PC-9 (cell line): ENCODE measurements at regions of chr6 and their contacts with region 1.

Region 1: GRCh38 chr6:108689247-108690161 is 128.8 kb downstream of the FOXO3 start:
- DNase-seq: peak; percentile 96 to 99
- H3K4me3 ChIP-seq: peak overlapping the region; percentile 7; the same call in 1 of the 2 replicates
- H3K27ac ChIP-seq: peak overlapping the region; percentile 83
- H3K4me1 ChIP-seq: peaks cover 66% of the 10 kb centered on the region
- H3K27me3 ChIP-seq: no peaks in the 10 kb centered on the region
- CTCF ChIP-seq: no peak

Region 2: DNA sequence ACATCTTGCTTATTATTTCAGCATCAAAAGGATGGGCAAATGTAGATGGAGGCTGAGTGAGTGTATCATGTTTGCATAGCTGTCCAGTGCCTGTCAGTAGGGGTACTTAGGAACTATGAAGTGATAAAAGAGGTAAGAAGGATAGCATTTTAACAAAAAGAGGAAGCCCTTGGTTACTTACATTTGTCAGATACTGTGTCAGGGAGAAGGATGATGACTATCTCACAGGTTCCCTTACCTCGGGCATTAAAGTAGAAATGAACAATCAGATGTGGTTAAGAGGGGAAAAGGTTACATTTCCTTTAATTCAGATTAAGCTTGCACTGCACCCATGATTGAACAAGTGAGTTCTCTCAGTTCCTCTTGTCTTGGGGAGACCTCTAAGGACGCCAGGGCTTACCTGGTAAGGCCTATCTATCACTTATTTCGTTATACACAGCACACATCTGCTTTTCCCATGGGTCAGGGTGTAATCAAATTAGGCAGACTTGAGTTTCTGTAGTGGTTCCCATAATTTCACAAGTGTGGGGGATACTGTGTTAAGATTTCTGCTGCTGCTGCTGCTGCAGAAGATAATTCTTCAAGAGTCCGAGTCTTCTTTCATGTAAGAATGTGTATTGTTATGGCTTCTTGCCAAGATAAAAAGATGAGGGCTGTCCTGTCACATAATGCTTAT is 124.3 kb before region 1 on chr6:
- CTCF ChIA-PET with region 1: no interaction called
- POLR2A ChIA-PET with region 1: interaction called, 9 read pairs
- intact Hi-C with region 1: loop called (anchors 1 kb)
- DNase-seq: peak in 1 of 2 experiments; percentile 67
- H3K4me3 ChIP-seq: peak overlapping the region; percentile 99
- H3K27ac ChIP-seq: peak overlapping the region; percentile 84
- H3K4me1 ChIP-seq: peaks cover 37% of the 10 kb centered on the region
- H3K27me3 ChIP-seq: no peaks in the 10 kb centered on the region
- CTCF ChIP-seq: no peak

Region 3: DNA sequence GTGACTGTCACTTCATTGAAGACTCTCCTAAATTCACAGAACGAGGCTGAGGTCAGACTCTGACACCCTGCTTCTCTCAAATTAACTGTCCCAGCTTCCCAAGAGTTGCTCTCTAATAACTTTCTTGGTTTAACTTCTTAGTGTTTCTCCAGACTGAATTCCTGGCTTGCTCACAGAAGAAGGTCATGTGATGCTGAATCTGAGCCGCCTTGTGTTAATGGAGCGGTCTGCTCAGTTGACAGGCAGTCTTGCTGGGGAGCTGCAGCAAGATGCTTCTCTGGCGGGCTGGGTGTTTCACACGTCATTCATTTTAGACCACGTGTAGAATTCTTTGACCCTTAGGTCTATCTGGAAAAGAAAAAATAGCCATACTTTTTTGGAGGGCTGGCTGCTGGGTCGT is 21.5 kb before region 1 on chr6:
- CTCF ChIA-PET with region 1: no interaction called
- POLR2A ChIA-PET with region 1: no interaction called
- intact Hi-C with region 1: no loop called
- DNase-seq: no peak
- H3K4me3 ChIP-seq: no peak overlapping the region
- H3K27ac ChIP-seq: no peak overlapping the region; the same call in 1 of the 2 replicates
- H3K4me1 ChIP-seq: peaks cover 38% of the 10 kb centered on the region
- H3K27me3 ChIP-seq: no peaks in the 10 kb centered on the region
- CTCF ChIP-seq: no peak

Region 4: DNA sequence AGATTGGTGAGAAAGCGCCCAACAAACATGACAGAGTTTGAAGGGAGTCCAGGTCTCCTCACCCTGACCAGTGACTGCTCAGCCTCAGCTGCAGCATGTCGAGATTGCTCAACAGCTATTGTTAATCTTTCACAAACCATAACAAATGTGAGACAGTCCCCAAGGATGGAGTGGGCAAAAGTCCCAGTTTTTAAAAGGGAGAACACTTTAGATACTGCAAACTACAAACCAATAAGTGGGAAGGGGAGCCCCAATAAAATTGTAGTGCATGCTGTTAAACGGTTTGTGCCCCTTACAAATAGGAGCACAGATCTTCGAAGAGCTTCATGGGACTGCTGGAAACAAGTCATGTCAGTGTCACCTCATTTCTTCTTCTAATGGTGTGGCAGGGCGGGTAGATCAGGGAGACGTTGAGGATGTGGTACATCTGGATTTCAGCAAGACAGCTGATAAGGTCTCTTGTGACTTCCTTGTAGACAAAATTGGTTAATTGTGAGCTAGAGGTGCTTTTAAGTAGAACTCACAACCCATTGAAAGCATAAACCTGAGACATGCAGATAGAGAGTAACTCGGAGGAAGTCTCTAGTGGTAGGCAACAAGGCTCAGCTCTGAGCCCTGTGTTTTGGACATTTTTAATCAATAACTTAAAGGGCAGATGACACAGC is 24.7 kb after region 1 on chr6:
- CTCF ChIA-PET with region 1: no interaction called
- POLR2A ChIA-PET with region 1: interaction called, 3 read pairs
- intact Hi-C with region 1: loop called (anchors 1 kb)
- DNase-seq: peak in 1 of 2 experiments; percentile 35
- H3K4me3 ChIP-seq: no peak overlapping the region
- H3K27ac ChIP-seq: no peak overlapping the region
- H3K4me1 ChIP-seq: peaks cover 35% of the 10 kb centered on the region
- H3K27me3 ChIP-seq: no peaks in the 10 kb centered on the region
- CTCF ChIP-seq: no peak

Region 5: DNA sequence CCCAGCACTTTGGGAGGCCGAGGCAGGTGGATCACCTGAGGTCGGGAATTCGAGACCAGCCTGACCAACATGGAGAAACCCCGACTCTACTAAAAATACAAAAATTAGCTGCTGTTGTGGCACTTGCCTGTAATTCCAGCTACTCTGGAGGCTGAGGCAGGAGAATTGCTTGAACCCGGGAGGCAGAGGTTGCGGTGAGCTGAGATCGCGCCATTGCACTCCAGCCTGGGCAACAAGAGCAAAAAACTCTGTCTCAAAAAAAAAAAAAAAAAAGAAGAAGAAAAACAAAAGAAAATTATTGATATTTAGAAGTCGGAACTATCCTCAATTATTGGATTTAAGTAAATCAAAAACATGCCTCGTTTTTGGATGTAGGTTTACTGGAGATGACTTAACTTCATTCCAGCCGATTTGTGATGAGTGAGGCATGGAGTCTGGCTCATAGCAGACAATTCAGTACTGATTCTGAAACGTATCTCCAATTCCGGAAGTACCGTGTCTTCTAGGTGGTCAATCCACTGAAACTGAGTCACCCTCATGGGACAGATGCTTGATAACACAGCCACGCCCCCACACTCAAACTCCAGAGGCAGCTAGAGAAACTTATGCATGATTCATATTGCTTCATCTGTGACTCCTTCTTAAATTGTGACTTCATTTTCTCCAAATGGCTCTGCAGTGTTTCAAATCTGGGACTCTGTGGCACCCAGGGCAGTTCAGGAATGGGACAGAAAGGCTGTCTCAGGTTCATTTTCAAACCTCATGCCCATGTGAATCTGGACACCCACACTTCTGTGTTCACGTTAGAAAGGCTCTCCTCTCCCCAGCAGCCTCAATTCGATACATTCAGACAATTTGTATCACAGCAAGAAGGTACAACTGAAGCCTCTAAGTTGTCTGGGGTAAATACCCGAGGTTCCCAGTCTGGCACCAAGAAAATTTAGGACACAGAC is 48.4 kb after region 1 on chr6:
- CTCF ChIA-PET with region 1: no interaction called
- POLR2A ChIA-PET with region 1: interaction called, 7 read pairs
- intact Hi-C with region 1: loop called (anchors 1 kb)
- DNase-seq: peak; percentile 84 to 99
- H3K4me3 ChIP-seq: peak overlapping the region; percentile 59
- H3K27ac ChIP-seq: peak overlapping the region; percentile 99
- H3K4me1 ChIP-seq: peaks cover 93% of the 10 kb centered on the region
- H3K27me3 ChIP-seq: no peaks in the 10 kb centered on the region
- CTCF ChIP-seq: no peak

Region 6: DNA sequence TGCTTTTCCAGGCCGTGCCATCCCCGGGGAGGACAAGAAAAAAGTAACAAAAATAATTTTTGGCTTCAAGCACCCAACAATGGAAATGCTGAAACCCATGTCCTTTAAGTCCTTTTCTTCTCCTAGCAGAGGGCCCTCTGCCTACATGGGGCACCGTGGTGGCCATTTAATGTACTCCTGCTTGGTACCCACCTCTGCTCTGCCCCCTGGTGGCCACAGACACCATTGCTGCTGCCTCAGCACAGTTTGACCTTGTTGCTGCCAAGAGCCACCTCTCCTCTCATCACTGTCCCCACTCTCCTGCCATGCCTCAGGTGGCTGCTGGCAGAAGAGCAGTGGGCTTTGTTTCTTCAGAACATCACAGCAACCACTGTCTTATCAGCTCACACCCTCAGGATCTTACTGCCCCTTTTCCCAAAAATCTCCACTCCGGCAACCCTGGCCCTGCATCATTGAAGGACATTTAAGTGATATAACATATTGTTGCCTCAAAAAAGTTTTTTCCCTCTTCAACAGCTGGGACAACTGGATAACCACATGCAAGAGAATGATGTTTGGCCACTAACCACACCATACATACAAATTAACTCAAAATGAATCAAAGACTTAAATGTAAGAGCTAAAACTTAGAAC is 145.8 kb after region 1 on chr6:
- CTCF ChIA-PET with region 1: no interaction called
- POLR2A ChIA-PET with region 1: no interaction called
- intact Hi-C with region 1: loop called (anchors 1 kb)
- DNase-seq: peak; percentile 61 to 78
- H3K4me3 ChIP-seq: no peak overlapping the region
- H3K27ac ChIP-seq: no peak overlapping the region
- H3K4me1 ChIP-seq: no peaks in the 10 kb centered on the region
- H3K27me3 ChIP-seq: no peaks in the 10 kb centered on the region
- CTCF ChIP-seq: peak; percentile 95